ENCODE measurements at regions of chrX and their contacts with region 1.

Region 1: GRCh38 chrX:109498434-109498833 is 16.5 kb upstream of the GUCY2F start:
- DNase-seq: no peak
- ATAC-seq: no peak
- H3K4me3 ChIP-seq: no peak overlapping the region
- H3K27ac ChIP-seq: no peak overlapping the region
- H3K4me1 ChIP-seq: no peaks in the 10 kb centered on the region
- H3K27me3 ChIP-seq: no peaks in the 10 kb centered on the region
- CTCF ChIP-seq: no peak
- POLR2A ChIP-seq: no peak

Region 2: DNA sequence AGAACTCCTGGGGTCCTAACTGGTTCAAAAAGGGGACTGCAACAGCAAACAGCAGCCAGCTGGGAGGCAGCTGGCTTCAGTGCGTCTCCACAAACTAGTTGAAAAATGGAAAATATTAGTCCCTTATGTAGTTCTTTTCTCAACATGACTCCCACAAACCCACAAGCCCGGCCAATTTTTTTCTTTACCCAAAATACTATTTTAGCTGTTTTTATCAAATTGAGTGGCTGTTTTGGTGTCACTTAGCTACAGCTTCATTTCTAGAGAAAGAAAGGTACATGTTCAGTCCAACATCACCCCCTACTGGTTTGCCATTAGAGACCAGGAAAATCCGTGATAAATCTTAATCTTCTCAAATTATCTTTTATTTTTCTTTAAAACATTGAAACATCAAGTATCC is 113.7 kb before region 1 on chrX:
- intact Hi-C with region 1: no loop called
- DNase-seq: peak in 1 of 4 donors; percentile 2
- ATAC-seq: no peak
- H3K4me3 ChIP-seq: no peak overlapping the region
- H3K27ac ChIP-seq: no peak overlapping the region
- H3K4me1 ChIP-seq: no peaks in the 10 kb centered on the region
- H3K27me3 ChIP-seq: no peaks in the 10 kb centered on the region
- CTCF ChIP-seq: peak in 5 of 7 experiments; percentile 17 to 45 (median 34)
- POLR2A ChIP-seq: no peak

Region 3: GRCh38 chrX:109624641-109625616 is 126.5 kb after region 1 on chrX and contains the start of gene KCNE5:
- intact Hi-C with region 1: loop called (anchors 10 kb)
- DNase-seq: peak; percentile 12 to 43 (median 12)
- ATAC-seq: no peak
- H3K4me3 ChIP-seq: peak within 1 kb of the TSS in 1 of 2 donors; percentile 8
- H3K27ac ChIP-seq: no peak within 1 kb of the TSS
- H3K4me1 ChIP-seq: no peaks in the 10 kb centered on the region
- H3K27me3 ChIP-seq: no peaks in the 10 kb centered on the region
- CTCF ChIP-seq: no peak
- POLR2A ChIP-seq: no peak
- total RNA-seq, gene KCNE5: not detected